GM10248 (cell line): ENCODE measurements at regions of chr10 and their contacts with region 1.

Region 1: GRCh38 chr10:102450194-102450938 is 977 bp downstream of the C10orf95 start:
- DNase-seq: peak; percentile 90
- CTCF ChIP-seq: no peak

Region 2: DNA sequence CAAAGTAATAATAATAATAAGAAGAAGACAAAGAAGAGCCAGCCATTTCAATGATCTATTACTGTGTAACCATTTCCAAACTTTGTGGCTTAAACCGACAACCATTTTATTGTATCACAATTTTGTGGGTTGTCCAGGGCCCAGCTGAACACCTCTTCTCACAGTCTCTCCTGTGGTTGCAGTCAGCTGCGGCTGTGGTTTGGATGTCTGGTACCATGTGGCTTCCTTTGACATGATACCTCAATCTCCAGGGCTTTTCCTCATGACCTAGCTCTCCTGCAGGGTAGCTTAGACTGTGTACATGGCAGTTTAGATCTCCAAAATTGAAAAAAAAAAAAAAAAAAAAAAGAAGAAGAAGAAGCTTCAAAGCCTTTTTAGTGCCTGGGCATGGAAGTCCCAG is 127.5 kb before region 1 on chr10:
- CTCF ChIA-PET with region 1: no interaction called
- POLR2A ChIA-PET with region 1: interaction called, 15 read pairs
- DNase-seq: no peak
- CTCF ChIP-seq: no peak

Region 3: GRCh38 chr10:102432162-102432950 is 18.0 kb before region 1 on chr10 and contains the start of gene CUEDC2:
- CTCF ChIA-PET with region 1: interaction called, 23 read pairs
- POLR2A ChIA-PET with region 1: interaction called, 6 read pairs
- DNase-seq: peak; percentile 94
- CTCF ChIP-seq: no peak

Region 4: DNA sequence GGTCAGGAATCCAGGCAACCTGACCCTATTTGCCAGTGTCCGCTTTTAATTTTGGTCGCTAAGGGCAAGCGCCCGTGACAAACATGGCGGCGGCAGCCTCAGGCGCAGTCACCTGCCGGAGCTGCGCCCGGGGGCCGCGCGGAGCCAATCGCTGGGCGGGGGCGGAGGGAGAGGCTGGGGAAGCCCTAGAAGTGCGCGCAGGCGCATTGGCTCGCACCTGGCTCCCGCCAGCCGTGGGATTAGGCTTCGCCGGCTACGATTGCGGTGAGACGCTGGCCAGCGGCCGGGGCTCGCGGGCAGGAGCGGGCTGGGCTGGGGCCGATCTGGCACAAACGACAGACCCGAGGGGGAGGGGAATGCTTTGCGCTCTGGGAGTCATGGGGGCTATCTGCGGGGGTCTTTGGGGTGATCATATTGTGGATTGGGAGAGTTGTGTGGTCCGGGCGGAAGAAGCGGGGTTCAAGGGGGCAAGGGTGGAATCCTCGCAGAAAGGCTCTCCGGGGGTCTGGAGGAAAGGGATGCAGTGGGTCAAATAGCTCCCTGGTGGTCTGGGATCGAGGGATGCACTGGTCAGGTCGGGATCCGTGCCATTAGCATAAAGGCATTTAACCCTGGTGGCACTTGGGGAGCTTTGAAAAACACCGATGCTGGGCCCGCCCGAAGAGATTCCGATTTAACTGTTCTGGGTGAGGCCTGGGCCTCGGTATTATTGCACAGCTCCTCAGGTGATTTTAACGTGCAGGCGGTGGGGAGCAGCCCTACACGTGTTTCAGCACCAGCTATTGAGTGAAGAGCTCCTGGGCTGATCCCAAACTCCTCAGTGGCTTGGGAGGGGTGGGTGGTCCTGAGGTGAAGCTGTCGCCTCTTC is 11.1 kb after region 1 on chr10:
- CTCF ChIA-PET with region 1: interaction called, 36 read pairs
- POLR2A ChIA-PET with region 1: interaction called, 9 read pairs
- DNase-seq: peak; percentile 100
- CTCF ChIP-seq: no peak

Region 5: DNA sequence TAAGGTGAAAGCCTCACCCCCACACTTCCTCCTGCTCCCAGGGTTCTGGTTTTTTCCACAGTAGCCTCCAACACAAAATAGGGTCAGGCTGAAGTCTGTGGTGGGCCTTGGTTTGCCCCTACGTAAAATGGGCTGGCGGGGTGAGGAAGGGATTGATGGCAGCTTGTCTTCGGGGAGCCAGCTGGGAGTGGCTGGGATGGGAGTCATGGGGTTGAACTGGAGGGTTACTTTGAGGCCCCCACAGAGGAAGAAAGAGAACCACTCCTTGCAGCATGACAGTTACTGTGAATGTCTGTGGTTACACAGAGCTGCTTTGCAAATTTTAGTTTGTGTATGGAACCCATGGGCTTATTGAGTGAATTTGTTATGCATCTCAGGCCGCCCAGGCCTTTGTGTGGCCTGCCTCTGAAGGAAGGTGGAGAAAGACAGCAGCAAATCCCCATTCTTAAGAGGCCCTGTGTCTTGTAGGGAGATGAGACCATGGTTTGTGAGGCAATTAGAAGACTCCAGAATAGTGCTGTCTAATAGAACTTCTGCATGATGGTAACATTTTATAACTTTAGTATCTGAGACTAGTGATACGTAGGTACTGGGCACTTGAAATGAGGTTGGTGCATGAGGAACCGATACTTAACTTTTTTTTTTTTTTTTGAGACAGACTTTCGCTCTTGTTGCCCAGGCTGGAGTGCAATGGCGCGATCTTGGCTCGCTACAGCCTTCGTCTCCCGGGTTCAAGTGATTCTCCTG is 202.0 kb after region 1 on chr10:
- CTCF ChIA-PET with region 1: no interaction called
- POLR2A ChIA-PET with region 1: no interaction called
- DNase-seq: peak; percentile 73
- CTCF ChIP-seq: no peak

Region 6: DNA sequence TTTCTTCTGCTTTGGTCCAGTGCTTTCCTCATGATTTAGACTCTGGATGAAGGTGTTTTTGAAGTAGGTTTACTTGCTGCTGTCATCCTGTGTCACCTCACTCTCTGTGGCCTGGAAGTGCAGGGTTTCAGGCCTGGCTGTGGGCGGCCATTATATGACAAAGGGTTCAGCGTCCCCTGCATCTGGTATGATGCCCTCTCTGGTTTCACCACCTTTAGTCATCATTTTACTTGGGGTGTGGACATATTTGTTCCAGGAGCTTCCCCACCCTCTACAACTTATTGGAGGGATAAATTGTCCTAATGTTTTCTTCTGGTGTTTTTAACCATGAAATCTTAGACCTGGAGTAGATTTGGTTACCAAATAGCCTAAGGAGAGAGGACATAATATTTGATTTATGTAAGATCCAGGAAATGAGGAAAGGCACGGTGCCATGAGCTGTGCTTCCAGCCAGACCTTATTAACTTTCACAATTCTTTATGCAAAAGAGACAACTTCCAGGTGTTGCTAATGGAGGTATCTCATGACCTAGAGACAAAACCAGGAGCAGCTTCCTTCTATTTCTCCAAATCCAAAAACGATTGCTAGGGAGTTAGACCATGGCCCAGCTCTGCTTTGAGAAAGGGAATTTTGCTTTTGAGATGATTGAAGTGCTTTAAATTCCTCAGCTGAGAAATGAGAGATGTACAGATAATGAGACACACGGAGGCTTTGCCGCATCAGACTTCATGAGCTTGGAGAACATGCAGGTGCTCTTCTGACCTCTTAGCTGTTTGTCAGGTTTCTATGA is 314.2 kb after region 1 on chr10:
- CTCF ChIA-PET with region 1: no interaction called
- POLR2A ChIA-PET with region 1: no interaction called
- DNase-seq: no peak
- CTCF ChIP-seq: no peak